Astrocyte of the cerebellum (primary cell): ENCODE measurements at regions of chr7 and their contacts with region 1.

Region 1: GRCh38 chr7:29091715-29092114 is 54.6 kb downstream of the CPVL start:
- DNase-seq: no peak
- H3K4me3 ChIP-seq: peak overlapping the region; percentile 1
- CTCF ChIP-seq: no peak

Region 2: DNA sequence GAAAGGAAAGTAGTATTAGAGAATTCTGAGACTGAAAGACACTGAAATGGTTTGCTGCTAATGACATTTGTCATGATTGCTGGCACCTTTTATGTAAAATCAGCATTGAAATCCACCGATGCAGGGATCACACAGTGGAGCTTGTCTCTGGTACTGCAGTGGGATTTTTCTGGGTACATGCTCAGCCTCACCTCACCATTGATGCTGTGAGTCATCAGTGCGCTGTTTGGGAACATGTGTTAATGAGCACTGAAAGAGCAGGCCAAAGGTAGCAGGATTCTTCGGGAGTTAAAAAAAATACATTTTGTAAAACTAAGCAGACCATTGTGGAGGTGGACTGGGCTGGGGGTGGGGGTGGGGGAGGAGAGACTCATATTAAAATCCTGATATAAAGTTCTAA is 504.5 kb before region 1 on chr7:
- in situ Hi-C with region 1: no loop called
- DNase-seq: no peak
- H3K4me3 ChIP-seq: no peak overlapping the region
- CTCF ChIP-seq: no peak

Region 3: DNA sequence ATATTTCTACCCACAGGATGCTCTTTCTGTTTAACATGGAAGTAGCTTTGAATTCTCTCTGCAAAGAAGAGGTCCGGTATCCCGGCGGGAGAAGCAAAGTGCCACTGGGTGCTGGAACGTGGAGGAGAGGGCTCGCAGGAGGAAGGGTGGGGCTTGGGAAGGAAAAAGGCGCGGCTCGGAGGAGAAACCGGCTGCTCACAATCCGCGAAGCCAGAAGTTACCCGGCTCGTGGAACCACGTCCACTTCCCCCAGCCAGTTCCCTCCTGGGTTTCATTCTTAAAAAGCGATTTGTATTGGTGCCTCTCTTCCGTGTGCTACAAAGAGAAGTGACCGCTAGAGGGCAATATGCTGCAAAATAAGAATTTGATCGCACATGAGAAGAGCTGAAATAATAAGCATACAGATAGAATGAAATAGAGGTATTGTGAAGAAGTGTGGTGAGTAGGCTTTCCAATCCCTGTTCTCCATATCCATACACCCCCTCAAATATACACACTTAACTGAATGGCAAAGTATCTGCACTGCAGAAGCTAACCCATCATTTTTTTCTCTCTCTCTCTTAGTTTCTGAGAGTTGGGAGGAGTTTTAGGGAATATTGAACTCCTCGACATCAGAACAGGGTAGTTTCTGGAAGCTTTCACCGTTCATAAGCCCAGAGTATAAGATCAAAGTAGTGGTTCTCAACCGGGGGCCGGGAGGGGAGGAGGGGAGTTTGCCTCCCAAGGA is 164.7 kb before region 1 on chr7:
- in situ Hi-C with region 1: loop called (anchors 5 kb)
- DNase-seq: peak; percentile 87
- H3K4me3 ChIP-seq: peak overlapping the region; percentile 53
- CTCF ChIP-seq: peak; percentile 75